Activated CD4-positive, alpha-beta memory T cell treated with anti-CD3 and anti-CD28 coated beads for 36 hours (primary cell): ENCODE measurements at regions of chr17 and their contacts with region 1.

Region 1: GRCh38 chr17:43917348-43918018 is 10.1 kb upstream of the MPP2 start:
- DNase-seq: peak; percentile 71
- H3K4me3 Mint-ChIP-seq: peak overlapping the region; percentile 68
- H3K27ac Mint-ChIP-seq: no peak overlapping the region
- H3K4me1 Mint-ChIP-seq: peaks cover 18% of the 10 kb centered on the region
- H3K27me3 Mint-ChIP-seq: no peaks in the 10 kb centered on the region

Region 2: GRCh38 chr17:43994272-43995149 is 77.0 kb after region 1 on chr17:
- CTCF ChIA-PET with region 1: no interaction called
- POLR2A ChIA-PET with region 1: no interaction called
- intact Hi-C with region 1: loop called (anchors 2 kb)
- DNase-seq: peak; percentile 79
- H3K4me3 Mint-ChIP-seq: no peak overlapping the region
- H3K27ac Mint-ChIP-seq: no peak overlapping the region
- H3K4me1 Mint-ChIP-seq: no peaks in the 10 kb centered on the region
- H3K27me3 Mint-ChIP-seq: peaks cover 12% of the 10 kb centered on the region